Activated naive CD4-positive, alpha-beta T cell treated with anti-CD3 and anti-CD28 coated beads for 36 hours (primary cell): ENCODE measurements at regions of chr6 and their contacts with region 1.

Region 1: GRCh38 chr6:5471044-5471443 is 209.7 kb downstream of the FARS2 start:
- DNase-seq: peak; percentile 79
- H3K4me3 Mint-ChIP-seq: no peak overlapping the region
- H3K27ac Mint-ChIP-seq: no peak overlapping the region
- H3K4me1 Mint-ChIP-seq: peaks cover 11% of the 10 kb centered on the region
- H3K27me3 Mint-ChIP-seq: no peaks in the 10 kb centered on the region

Region 2: DNA sequence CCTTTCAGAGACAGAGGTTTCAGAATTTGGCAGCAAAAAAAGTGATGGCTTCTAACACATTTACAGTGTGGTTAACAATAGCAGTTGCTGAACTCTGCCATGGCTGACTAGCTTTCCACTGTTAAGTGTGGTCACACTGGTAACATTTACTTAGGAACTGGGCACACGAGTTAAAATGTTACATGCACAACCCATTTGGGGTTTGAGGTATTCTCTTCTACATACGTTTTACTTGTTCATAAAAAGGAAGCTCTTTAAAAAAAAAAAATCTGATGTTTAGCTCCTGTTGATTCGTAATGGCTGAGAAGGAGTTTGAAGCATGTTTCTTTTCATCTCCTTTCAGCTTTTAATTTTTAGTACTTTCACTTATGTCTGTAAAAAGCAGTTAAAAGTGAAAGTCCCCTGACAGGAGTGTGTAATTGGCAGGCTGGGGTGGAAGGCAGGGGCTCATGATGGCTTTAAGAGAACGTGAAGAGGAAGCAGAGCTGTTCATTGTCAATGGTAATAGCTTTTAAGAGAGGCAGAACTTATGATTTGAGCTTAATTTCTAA is 36.2 kb after region 1 on chr6:
- CTCF ChIA-PET with region 1: interaction called, 14 read pairs
- intact Hi-C with region 1: no loop called
- DNase-seq: peak; percentile 23
- H3K4me3 Mint-ChIP-seq: peak overlapping the region; percentile 15
- H3K27ac Mint-ChIP-seq: peak overlapping the region; percentile 25
- H3K4me1 Mint-ChIP-seq: peaks cover 29% of the 10 kb centered on the region
- H3K27me3 Mint-ChIP-seq: no peaks in the 10 kb centered on the region

Region 3: DNA sequence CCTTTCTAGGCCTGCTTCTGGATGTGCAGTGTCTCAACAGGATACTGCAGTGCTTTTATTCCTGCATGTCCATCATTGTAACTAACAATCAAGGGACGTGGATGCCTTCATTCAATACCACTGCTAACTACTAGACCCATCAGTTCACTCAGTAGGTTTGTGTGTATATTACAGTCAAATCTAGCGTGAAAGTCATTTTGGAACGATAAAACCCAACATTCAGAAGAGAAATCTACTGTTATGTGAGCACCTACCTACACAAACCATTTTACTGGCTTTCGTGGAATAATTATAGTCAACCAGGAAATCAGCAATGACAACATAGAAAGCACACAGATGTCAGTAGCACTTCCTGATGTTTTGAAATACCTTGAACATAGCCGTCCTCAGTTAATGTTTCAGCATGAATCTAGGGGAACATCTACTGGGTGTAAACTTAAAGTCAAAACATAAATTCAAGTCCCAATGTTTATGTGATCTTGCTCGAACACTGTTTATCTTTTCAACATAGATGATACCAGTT is 60.9 kb after region 1 on chr6:
- CTCF ChIA-PET with region 1: no interaction called
- intact Hi-C with region 1: loop called (anchors 1 kb)
- DNase-seq: no peak
- H3K4me3 Mint-ChIP-seq: no peak overlapping the region
- H3K27ac Mint-ChIP-seq: no peak overlapping the region
- H3K4me1 Mint-ChIP-seq: peaks cover 12% of the 10 kb centered on the region
- H3K27me3 Mint-ChIP-seq: no peaks in the 10 kb centered on the region

Region 4: DNA sequence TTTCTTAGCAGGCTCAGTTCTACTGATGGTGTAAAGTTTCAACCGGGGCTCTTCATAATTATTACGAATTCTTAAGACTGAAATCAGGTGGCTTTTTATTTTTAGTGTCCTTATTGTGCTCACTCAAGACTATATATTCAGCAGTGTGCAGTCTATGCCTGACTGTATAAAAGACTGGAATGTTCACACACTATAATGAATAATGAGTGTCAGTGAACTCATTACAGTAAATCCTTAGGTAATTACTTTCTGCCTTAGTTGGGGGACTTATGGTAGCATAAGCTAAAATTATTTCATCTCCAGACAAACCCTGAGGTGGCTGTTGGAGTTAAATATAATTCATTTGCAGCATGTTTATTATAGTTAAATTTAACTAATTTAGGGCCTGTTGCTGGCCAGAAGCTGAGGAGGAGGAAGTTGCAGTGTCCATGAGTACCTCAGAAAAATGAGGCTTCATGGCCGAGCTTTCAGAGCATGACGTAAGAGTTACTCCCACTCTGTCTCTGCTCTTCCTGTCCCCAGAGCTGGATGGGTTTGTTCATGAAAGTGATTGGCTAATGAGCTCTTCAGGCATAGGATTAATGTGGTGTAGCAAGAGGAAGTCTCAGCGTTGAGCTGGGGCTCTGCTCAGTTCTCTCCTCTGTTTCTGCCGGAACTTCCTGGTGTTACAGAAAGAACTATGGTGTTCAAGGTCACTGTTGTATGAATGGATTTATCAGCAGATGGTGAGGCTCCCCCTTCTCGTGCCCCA is 199.9 kb after region 1 on chr6:
- CTCF ChIA-PET with region 1: no interaction called
- intact Hi-C with region 1: loop called (anchors 2 kb)
- DNase-seq: peak; percentile 51
- H3K4me3 Mint-ChIP-seq: peak overlapping the region; percentile 41
- H3K27ac Mint-ChIP-seq: peak overlapping the region; percentile 70
- H3K4me1 Mint-ChIP-seq: peaks cover 56% of the 10 kb centered on the region
- H3K27me3 Mint-ChIP-seq: no peaks in the 10 kb centered on the region

Region 5: GRCh38 chr6:5782783-5783547 is 311.9 kb after region 1 on chr6:
- CTCF ChIA-PET with region 1: interaction called, 5 read pairs
- intact Hi-C with region 1: loop called (anchors 10 kb)
- DNase-seq: no peak
- H3K4me3 Mint-ChIP-seq: no peak overlapping the region
- H3K27ac Mint-ChIP-seq: no peak overlapping the region
- H3K4me1 Mint-ChIP-seq: peaks cover 14% of the 10 kb centered on the region
- H3K27me3 Mint-ChIP-seq: no peaks in the 10 kb centered on the region

Region 6: GRCh38 chr6:6131492-6132109 is 660.6 kb after region 1 on chr6:
- CTCF ChIA-PET with region 1: no interaction called
- intact Hi-C with region 1: loop called (anchors 2 kb)
- DNase-seq: peak; percentile 11
- H3K4me3 Mint-ChIP-seq: no peak overlapping the region
- H3K27ac Mint-ChIP-seq: no peak overlapping the region
- H3K4me1 Mint-ChIP-seq: no peaks in the 10 kb centered on the region
- H3K27me3 Mint-ChIP-seq: no peaks in the 10 kb centered on the region

Region 7: GRCh38 chr6:6315660-6316059 is 844.6 kb after region 1 on chr6:
- CTCF ChIA-PET with region 1: no interaction called
- intact Hi-C with region 1: loop called (anchors 10 kb)
- DNase-seq: peak; percentile 64
- H3K4me3 Mint-ChIP-seq: no peak overlapping the region
- H3K27ac Mint-ChIP-seq: no peak overlapping the region
- H3K4me1 Mint-ChIP-seq: no peaks in the 10 kb centered on the region
- H3K27me3 Mint-ChIP-seq: peaks cover 48% of the 10 kb centered on the region